PC-9 (cell line): ENCODE measurements at regions of chr6 and their contacts with region 1.

Region 1: GRCh38 chr6:69796642-69797390 is at the start of gene LMBRD1:
- DNase-seq: peak; percentile 87 to 99
- H3K4me3 ChIP-seq: peak within 1 kb of the TSS; percentile 70
- H3K27ac ChIP-seq: peak within 1 kb of the TSS; percentile 62
- H3K4me1 ChIP-seq: peaks cover 9% of the 10 kb centered on the region; the same call in 1 of the 2 replicates
- H3K27me3 ChIP-seq: no peaks in the 10 kb centered on the region
- CTCF ChIP-seq: peak; percentile 91
- total RNA-seq, gene LMBRD1: 24.6 and 25.2 TPM in 2 replicates

Region 2: DNA sequence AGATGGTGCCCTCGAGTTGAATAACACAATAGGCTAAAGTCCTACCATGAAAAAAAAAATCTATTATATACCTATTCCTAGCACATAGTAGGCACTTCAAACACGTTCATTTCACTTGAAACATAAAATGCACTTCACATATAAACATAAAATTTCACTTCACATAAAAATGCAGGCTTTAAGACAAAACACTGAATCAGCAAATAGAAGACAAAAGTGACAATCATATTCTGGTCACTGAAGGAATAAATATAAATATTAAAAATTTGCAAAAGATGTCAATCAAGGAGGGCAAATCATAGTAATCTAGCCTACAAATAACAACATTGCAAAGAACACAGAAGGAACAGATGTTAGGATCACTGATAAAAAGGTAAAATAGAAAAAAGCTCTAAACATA is 153.1 kb before region 1 on chr6:
- CTCF ChIA-PET with region 1: interaction called, 14 read pairs
- POLR2A ChIA-PET with region 1: no interaction called
- intact Hi-C with region 1: no loop called
- DNase-seq: no peak
- H3K4me3 ChIP-seq: no peak overlapping the region
- H3K27ac ChIP-seq: no peak overlapping the region
- H3K4me1 ChIP-seq: no peaks in the 10 kb centered on the region
- H3K27me3 ChIP-seq: no peaks in the 10 kb centered on the region
- CTCF ChIP-seq: no peak

Region 3: GRCh38 chr6:69813508-69813907 is 16.7 kb after region 1 on chr6:
- CTCF ChIA-PET with region 1: interaction called, 11 read pairs
- POLR2A ChIA-PET with region 1: no interaction called
- intact Hi-C with region 1: no loop called
- DNase-seq: no peak
- H3K4me3 ChIP-seq: no peak overlapping the region
- H3K27ac ChIP-seq: no peak overlapping the region
- H3K4me1 ChIP-seq: peaks cover 21% of the 10 kb centered on the region
- H3K27me3 ChIP-seq: no peaks in the 10 kb centered on the region
- CTCF ChIP-seq: no peak